ENCODE measurements at regions of chr7 and their contacts with region 1.

Region 1: DNA sequence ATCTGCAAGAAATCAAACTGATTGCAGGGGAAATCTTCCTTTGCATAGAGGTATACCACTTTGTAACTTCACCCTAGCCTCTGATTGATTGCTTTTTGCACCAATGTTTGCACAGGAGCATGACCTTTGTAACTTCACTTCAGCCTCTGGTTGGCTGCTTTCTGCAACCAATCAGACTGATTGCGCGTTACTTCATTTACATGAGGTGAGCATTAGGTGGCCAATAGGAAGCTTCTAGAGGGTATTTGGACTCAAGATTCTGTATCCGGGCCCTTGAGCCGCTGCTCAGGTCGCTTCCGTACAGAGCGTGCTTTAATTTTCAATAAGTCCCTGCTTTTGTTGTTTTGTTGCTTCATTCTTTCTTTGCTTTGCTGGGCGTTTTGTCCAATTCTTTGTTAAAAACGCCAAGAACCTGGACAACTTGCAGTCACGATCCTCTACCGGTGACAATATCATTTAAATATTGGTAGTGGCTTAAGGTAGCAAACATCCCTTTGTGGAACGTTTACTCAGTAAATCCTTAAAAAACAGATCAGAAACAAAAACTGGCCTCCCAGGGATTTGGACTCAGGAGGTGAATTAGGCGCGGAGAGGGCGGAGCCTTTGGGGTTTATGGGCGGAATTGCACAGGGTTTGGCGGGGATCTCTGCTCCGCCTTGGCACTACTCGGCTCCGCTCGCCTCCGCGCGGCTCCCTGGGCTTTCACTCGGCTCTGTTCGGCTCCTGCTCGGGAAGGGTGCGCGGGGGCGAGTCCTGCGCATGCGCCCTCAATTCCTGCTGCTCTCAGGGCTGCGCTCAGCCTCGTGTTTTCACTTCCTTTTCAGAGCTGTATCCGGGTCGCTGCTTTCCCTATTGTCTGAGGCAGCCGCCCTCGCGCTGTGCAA is at the start of gene PHF14:
- DNase-seq: peak; percentile 88 to 97 (median 94)
- ATAC-seq: peak; percentile 94 to 96
- H3K4me3 Mint-ChIP-seq: peak within 1 kb of the TSS; percentile 87 to 97 (median 93)
- H3K27ac Mint-ChIP-seq: peak within 1 kb of the TSS; percentile 91 to 98 (median 94)
- H3K4me1 Mint-ChIP-seq: peaks cover 15 to 47% (median 43%) of the 10 kb centered on the region in 4 donors
- H3K27me3 Mint-ChIP-seq: peaks cover 0 to 12% (median 0%) of the 10 kb centered on the region in 5 donors
- polyA plus RNA-seq, gene PHF14: 9.0 to 10.8 (median 10.1) TPM

Region 2: GRCh38 chr7:10939911-10940703 is 33.2 kb before region 1 on chr7:
- POLR2A ChIA-PET with region 1: interaction called, 88 read pairs
- DNase-seq: peak; percentile 78 to 95 (median 90)
- ATAC-seq: peak; percentile 87 to 88
- H3K4me3 Mint-ChIP-seq: no peak overlapping the region
- H3K27ac Mint-ChIP-seq: no peak overlapping the region
- H3K4me1 Mint-ChIP-seq: peaks cover 10 to 44% (median 30%) of the 10 kb centered on the region in 4 donors
- H3K27me3 Mint-ChIP-seq: no peaks in the 10 kb centered on the region